Endothelial cell of umbilical vein (primary cell): ENCODE measurements at regions of chr10 and their contacts with region 1.

Region 1: DNA sequence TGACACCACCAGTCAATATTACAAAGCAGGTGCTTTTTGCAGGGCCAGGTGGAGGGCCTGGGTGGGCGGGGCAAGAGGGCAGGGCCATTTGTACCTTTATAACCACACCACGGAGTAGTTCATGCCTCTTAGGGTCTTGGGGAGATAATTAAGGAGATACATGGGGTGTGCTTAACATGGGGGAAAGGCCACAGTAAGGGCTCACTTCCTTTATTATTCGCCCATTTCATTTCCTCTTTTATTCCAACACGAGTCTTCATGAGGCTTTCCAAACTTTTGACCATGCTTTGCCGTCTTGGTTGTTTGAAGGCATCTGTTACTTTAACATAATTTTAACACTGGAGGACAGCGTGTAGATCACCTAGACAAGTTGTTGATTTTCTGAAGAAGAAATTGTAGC is 33.3 kb upstream of the LYZL2 start:
- DNase-seq: no peak
- H3K4me3 ChIP-seq: no peak overlapping the region
- H3K27ac ChIP-seq: no peak overlapping the region
- H3K4me1 ChIP-seq: no peaks in the 10 kb centered on the region
- H3K27me3 ChIP-seq: peaks cover under 1 to 1% of the 10 kb centered on the region in 2 experiments
- CTCF ChIP-seq: no peak
- POLR2A ChIP-seq: no peak

Region 2: GRCh38 chr10:30639946-30640786 is 22.6 kb before region 1 on chr10:
- CTCF ChIA-PET with region 1: interaction called, 14 read pairs
- POLR2A ChIA-PET with region 1: no interaction called
- dilution Hi-C with region 1: no loop called
- intact Hi-C with region 1: no loop called
- DNase-seq: peak; percentile 86
- H3K4me3 ChIP-seq: no peak overlapping the region
- H3K27ac ChIP-seq: peak overlapping the region; percentile 44
- H3K4me1 ChIP-seq: peaks cover 61% of the 10 kb centered on the region
- H3K27me3 ChIP-seq: peaks cover 0 to 1% of the 10 kb centered on the region in 2 experiments
- CTCF ChIP-seq: peak; percentile 64 to 70
- POLR2A ChIP-seq: no peak